ENCODE measurements at regions of chr6 and their contacts with region 1.

Region 1: DNA sequence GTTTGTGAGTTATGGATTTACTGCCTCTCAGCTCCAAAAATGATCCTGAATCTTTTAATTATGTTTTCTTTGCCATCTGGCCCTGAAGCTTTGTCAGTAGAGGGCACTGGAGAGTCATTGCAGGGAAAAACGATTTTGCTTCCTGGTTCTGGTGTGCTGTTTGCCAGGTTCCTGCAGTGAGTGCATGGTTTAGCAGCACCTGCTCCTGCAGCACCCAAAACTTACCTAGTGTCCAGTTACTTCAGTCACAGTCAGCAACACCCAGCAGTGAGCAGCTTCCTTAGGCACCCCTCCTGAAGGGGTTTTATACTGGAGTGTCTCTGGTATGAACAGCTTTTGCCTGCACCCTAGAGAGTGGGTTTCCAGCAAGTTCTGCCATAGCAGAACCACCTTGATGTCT is 6.0 kb upstream of the TRIM26 start:
- DNase-seq: peak; percentile 61 to 73 (median 64)
- H3K4me3 ChIP-seq: no peak overlapping the region
- H3K27ac ChIP-seq: no peak overlapping the region
- H3K4me1 ChIP-seq: peaks cover 0 to 7% (median 6%) of the 10 kb centered on the region in 4 experiments
- H3K27me3 ChIP-seq: peaks cover 0 to 3% (median 0%) of the 10 kb centered on the region in 5 experiments

Region 2: GRCh38 chr6:30206799-30207618 is 12.2 kb before region 1 on chr6:
- CTCF ChIA-PET with region 1: interaction called, 16 read pairs
- POLR2A ChIA-PET with region 1: no interaction called
- DNase-seq: no peak
- H3K4me3 ChIP-seq: no peak overlapping the region
- H3K27ac ChIP-seq: no peak overlapping the region
- H3K4me1 ChIP-seq: peaks cover 3 to 10% (median 7%) of the 10 kb centered on the region in 4 experiments
- H3K27me3 ChIP-seq: no peaks in the 10 kb centered on the region